RWPE1 (cell line): ENCODE measurements at regions of chr2 and their contacts with region 1.

Region 1: GRCh38 chr2:88669371-88670214 is 21.9 kb upstream of the RPIA start:
- DNase-seq: peak; percentile 78
- H3K27ac ChIP-seq: no peak overlapping the region
- CTCF ChIP-seq: peak; percentile 66

Region 2: GRCh38 chr2:88590998-88591613 is 78.5 kb before region 1 on chr2:
- CTCF ChIA-PET with region 1: interaction called, 17 read pairs
- POLR2A ChIA-PET with region 1: interaction called, 5 read pairs
- DNase-seq: peak; percentile 72
- H3K27ac ChIP-seq: no peak overlapping the region
- CTCF ChIP-seq: peak; percentile 89

Region 3: DNA sequence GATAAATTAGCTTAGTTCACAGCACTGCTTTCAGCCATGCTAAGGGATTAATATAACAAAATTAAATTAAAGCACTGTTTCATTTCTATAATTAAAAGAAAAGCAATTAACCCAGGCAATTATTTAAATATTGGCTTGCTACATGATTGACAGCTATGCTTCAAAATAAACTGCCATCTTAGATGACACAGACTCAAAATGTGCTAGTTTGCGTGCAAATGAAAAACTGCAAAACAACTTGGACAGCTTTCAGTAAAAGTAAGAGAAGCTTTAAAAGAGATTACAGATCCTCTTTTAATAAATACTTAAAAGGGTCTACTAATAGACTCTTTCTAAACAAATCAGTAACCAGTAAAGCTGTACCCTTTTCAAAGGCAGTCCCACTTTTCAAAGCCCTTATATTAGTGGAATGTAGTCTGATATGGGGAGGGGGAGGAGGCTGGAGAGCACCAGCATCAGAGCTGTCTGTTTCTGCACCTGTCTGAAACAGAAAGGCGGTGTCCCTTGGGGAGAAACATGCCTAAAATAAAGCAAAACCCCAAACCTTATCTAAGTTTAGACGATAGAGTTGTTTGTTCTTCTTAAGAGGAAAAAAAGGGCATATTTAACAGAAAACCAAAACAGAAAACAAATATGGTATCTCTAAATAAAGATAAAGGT is 63.1 kb before region 1 on chr2:
- CTCF ChIA-PET with region 1: interaction called, 14 read pairs
- POLR2A ChIA-PET with region 1: interaction called, 4 read pairs
- DNase-seq: no peak
- H3K27ac ChIP-seq: no peak overlapping the region
- CTCF ChIP-seq: no peak

Region 4: GRCh38 chr2:88724643-88725332 is 55.2 kb after region 1 on chr2:
- CTCF ChIA-PET with region 1: no interaction called
- POLR2A ChIA-PET with region 1: no interaction called
- DNase-seq: no peak
- H3K27ac ChIP-seq: no peak overlapping the region
- CTCF ChIP-seq: no peak

Region 5: GRCh38 chr2:88838165-88838635 is 168.6 kb after region 1 on chr2:
- CTCF ChIA-PET with region 1: no interaction called
- POLR2A ChIA-PET with region 1: no interaction called
- DNase-seq: no peak
- H3K27ac ChIP-seq: no peak overlapping the region
- CTCF ChIP-seq: no peak